Activated CD4-positive, alpha-beta T cell treated with anti-CD3 and anti-CD28 coated beads, Interleukin-2, amount 10 ng/mL, durations not matched to agents 7 days and 5 days (primary cell): ENCODE measurements at regions of chr1 and their contacts with region 1.

Region 1: GRCh38 chr1:203124546-203125317 is 2.8 kb upstream of the ADORA1 start:
- DNase-seq: no peak
- H3K4me3 Mint-ChIP-seq: no peak overlapping the region
- H3K27ac Mint-ChIP-seq: no peak overlapping the region
- H3K4me1 Mint-ChIP-seq: peaks cover 8% of the 10 kb centered on the region
- H3K27me3 Mint-ChIP-seq: peaks cover 65% of the 10 kb centered on the region

Region 2: GRCh38 chr1:203112301-203112874 is 12.3 kb before region 1 on chr1:
- CTCF ChIA-PET with region 1: no interaction called
- POLR2A ChIA-PET with region 1: no interaction called
- DNase-seq: no peak
- H3K4me3 Mint-ChIP-seq: no peak overlapping the region
- H3K27ac Mint-ChIP-seq: no peak overlapping the region
- H3K4me1 Mint-ChIP-seq: no peaks in the 10 kb centered on the region
- H3K27me3 Mint-ChIP-seq: peaks cover 58% of the 10 kb centered on the region

Region 3: GRCh38 chr1:203172128-203173010 is 47.6 kb after region 1 on chr1:
- CTCF ChIA-PET with region 1: interaction called, 10 read pairs
- POLR2A ChIA-PET with region 1: no interaction called
- DNase-seq: peak; percentile 65
- H3K4me3 Mint-ChIP-seq: no peak overlapping the region
- H3K27ac Mint-ChIP-seq: no peak overlapping the region
- H3K4me1 Mint-ChIP-seq: no peaks in the 10 kb centered on the region
- H3K27me3 Mint-ChIP-seq: no peaks in the 10 kb centered on the region